ENCODE measurements at regions of chr11 and their contacts with region 1.

Region 1: GRCh38 chr11:9626496-9627394 is 37.1 kb upstream of the SWAP70 start:
- DNase-seq: no peak

Region 2: DNA sequence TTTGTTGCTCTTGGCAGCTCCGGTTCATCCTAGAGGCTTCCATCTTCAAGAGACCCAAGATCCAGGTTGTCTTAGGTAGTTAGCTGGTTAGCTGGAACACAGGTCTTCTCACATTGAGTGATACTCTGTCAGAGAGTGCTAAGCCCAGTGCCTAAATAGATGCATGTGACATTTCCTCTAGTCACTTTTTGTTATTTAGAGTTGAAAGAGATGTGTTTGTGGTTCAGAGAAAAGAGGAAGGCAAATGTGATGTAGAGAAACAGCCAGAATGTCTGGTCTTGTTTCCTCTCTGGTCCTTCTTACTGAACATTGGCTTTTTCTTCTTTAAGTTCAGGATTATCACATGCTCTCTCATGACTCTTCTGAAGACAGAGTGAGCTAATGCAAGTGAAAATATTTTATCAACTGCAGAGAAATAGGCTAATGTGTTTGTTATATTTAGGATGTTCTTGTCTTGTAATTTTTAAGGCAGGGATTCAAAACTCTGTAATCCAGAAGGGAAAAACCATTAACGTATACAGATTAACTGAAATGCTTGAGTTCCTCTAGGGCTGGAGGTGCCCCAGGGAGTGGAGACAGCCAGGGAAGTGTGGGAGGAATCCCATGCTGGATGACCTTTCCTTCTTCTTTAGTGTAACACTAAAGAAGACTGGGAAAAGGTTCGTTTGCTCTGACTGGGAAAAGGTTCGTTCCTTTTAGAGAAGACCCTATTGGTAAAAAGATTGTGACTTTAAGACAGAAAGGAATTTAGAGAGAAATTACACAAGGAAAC is 112.6 kb after region 1 on chr11:
- intact Hi-C with region 1: loop called in 1 of 2 experiments (anchors 10 kb)
- DNase-seq: no peak

Region 3: DNA sequence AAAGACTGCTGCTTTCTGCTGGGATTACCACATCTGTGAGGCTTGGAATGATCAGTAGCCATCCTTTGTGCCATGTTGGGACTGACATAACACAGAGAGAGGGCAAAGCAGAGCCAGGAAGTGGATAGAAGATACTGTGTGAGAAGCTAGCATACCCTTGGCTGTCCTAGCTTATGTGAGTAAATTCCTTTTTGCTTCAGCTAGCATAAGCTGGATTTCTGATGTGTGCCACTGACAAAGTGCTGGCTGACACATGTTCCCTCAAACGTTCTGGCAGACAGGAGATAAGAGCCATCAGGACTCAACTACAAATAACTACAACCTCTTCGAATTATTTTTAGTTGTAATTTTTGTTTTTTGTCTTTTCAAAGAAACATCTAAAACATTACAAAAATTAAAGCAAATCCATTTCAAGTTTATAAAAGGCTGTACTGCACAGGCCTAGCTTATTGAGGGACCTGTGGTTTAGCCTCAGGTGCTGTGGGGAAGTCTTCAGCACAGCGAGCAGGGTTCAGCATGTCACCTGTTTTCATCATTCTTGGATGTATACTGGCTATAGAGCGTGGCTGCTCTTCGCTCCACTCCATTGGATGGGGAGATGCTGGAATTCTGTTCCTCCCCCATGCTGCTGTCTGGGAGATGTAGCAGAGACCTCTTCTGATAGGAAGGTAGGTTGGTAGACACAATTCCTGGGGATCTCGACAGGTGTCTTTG is 158.0 kb after region 1 on chr11:
- intact Hi-C with region 1: no loop called
- DNase-seq: no peak

Region 4: GRCh38 chr11:9815486-9816136 is 188.9 kb after region 1 on chr11:
- intact Hi-C with region 1: no loop called
- DNase-seq: no peak